ENCODE measurements at regions of chr9 and their contacts with region 1.

Region 1: GRCh38 chr9:130707225-130707976 is 13.8 kb downstream of the EXOSC2 start:
- DNase-seq: peak in 1 of 2 donors; percentile 89
- H3K4me3 ChIP-seq: no peak overlapping the region
- CTCF ChIP-seq: no peak
- POLR2A ChIP-seq: no peak

Region 2: GRCh38 chr9:130626249-130626992 is 81.0 kb before region 1 on chr9:
- intact Hi-C with region 1: no loop called
- DNase-seq: peak in 1 of 2 donors; percentile 62
- H3K4me3 ChIP-seq: no peak overlapping the region
- CTCF ChIP-seq: no peak
- POLR2A ChIP-seq: no peak

Region 3: GRCh38 chr9:130745210-130745800 is 37.9 kb after region 1 on chr9:
- intact Hi-C with region 1: no loop called
- DNase-seq: no peak
- H3K4me3 ChIP-seq: no peak overlapping the region
- CTCF ChIP-seq: no peak
- POLR2A ChIP-seq: no peak

Region 4: DNA sequence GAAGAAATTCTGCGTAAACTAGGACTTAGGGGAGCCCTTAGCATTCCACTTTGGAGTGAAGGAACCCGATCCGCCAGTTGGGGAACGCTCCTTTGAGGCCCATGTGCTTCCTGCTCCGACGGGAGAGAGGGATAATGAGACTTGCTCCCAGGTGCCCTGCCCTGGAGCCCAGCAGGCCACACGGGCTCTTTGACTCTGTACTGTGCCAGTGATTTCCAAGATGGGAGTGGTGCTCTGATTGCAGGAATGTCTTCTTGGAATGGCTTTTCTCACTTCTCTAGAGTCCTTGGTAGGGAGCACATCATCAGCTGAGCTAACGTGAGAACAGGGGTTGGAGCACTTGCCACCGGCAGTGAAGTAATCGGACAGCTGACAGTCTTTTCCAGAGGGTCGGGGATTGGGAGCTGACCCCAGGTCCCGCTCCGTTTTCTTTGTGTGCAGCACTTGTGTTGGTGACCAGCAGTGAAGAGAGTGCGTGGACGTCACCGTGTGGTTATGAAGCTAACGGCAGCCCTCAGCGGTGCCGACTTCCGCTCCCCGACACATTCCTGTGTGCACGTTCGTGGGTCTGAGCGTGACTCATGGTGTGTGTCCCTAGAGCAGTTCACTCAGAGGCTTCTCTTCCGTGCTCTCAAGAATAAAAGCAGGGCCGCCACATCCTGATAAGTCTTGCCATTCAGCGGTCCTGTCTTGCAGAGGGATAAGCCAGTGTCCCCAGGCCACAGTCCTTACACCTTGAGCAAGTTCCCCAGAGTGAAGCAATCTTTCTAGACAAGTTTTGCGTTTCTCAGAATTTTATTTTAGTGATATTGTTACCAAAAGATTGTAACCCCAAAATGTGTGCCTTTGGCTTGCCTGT is 153.3 kb after region 1 on chr9:
- intact Hi-C with region 1: loop called (anchors 5 kb)
- DNase-seq: peak; percentile 72 to 94
- H3K4me3 ChIP-seq: no peak overlapping the region
- CTCF ChIP-seq: no peak
- POLR2A ChIP-seq: no peak

Region 5: GRCh38 chr9:131018621-131019020 is 311.2 kb after region 1 on chr9:
- intact Hi-C with region 1: no loop called
- DNase-seq: no peak
- H3K4me3 ChIP-seq: no peak overlapping the region
- CTCF ChIP-seq: no peak
- POLR2A ChIP-seq: no peak

Region 6: DNA sequence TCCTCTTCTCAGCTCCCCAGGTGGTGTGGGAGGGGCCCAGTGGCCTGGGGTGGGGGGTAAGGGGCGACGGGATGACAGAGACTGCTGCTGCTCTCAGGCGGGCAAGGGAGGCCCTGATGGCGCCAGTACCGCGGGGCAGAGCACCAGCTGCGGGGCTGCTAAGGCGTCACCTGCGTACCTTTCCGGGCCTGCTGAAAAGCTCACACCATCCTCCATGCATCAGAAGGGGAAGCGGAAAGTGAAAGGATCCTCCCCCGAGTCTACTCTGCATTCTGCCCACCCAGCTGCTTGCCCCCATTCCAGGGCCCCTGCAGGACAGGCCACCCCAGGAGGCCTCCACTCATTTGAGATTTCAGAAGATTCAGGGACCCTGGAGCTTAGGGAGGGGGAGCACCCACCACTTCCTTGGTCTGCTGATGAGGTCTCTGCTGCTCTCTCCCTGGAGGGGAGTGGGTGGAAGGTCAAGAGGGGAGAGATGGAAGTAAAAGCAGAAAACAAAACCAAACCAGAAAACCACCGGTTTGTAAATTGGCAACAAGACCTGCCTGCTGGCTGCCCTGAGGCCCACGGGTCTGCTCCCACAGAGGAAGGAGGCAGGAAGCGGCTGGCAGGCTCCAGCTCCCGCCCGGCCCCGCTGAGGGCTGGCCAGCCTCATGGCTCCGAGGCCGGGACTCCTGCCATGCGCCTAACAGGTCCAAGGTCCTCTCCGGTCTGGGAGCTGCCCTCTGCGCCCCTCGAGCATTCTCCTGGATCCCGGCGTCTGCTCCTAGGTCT is 871.5 kb after region 1 on chr9:
- intact Hi-C with region 1: no loop called
- DNase-seq: peak in 1 of 2 donors; percentile 82
- H3K4me3 ChIP-seq: no peak overlapping the region
- CTCF ChIP-seq: no peak
- POLR2A ChIP-seq: no peak